ENCODE measurements at regions of chr11 and their contacts with region 1.

Region 1: DNA sequence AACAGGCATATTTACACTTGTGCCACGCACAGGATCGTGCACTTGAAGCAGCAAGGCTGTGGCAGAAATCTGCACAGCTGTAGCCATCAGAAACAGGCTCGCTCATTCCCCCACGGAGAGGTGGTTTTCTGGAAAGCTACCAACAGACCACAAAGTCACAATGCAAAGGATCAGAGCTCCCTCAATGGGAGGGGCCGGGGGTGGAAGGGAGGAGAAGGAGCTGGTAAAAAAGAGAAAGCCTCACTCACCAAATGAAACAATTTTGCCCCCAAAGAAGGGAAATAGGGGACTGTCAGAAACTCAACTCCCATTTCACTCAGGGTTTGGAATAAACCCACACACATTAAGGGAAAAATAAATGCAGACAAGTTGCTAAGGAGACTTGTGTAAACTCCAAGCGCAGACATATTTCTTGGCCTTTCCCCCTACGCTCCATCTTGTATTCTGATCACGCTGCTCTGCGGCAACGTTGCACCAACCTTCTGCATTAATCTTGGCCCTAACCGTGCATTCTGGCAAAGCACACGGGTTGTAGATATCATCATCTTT is 43.2 kb upstream of the BLID start:
- DNase-seq: peak; percentile 75
- ATAC-seq: peak; percentile 14
- H3K4me3 ChIP-seq: peak overlapping the region; percentile 75
- H3K27ac ChIP-seq: peak overlapping the region; percentile 99
- H3K4me1 ChIP-seq: peaks cover 70% of the 10 kb centered on the region
- H3K27me3 ChIP-seq: no peaks in the 10 kb centered on the region
- CTCF ChIP-seq: no peak

Region 2: DNA sequence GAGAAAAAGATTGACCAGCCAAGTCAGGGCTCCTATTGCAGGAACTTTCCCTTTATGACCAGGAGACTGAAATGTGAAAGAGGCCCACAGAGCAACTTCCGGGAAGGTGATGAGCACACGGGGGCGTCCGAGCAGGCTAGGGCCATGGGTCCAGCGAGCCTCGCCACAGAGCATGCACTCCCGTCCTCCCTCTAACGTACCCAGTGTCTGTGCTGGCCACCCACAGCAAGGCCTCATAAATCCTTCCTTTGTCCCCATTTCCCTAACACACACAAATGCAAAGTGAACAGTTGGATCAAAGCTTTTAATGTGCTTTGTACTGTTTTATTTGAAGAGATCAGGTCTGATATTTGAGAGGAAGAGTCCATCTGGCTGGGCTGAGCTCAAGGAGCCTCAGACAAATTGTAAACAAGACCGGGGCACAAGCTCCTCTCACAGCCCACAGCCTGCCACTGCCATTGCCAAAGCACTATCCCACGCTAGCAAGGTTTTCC is 87.5 kb before region 1 on chr11:
- CTCF ChIA-PET with region 1: no interaction called
- POLR2A ChIA-PET with region 1: no interaction called
- intact Hi-C with region 1: no loop called
- DNase-seq: no peak
- ATAC-seq: no peak
- H3K4me3 ChIP-seq: no peak overlapping the region
- H3K27ac ChIP-seq: no peak overlapping the region
- H3K4me1 ChIP-seq: no peaks in the 10 kb centered on the region
- H3K27me3 ChIP-seq: peaks cover 16% of the 10 kb centered on the region
- CTCF ChIP-seq: no peak

Region 3: GRCh38 chr11:122170815-122171475 is 11.7 kb after region 1 on chr11:
- CTCF ChIA-PET with region 1: no interaction called
- POLR2A ChIA-PET with region 1: interaction called, 4 read pairs
- intact Hi-C with region 1: loop called (anchors 1 kb)
- DNase-seq: peak; percentile 99
- ATAC-seq: peak; percentile 69
- H3K4me3 ChIP-seq: peak overlapping the region; percentile 48
- H3K27ac ChIP-seq: peak overlapping the region; percentile 99
- H3K4me1 ChIP-seq: peaks cover 89% of the 10 kb centered on the region
- H3K27me3 ChIP-seq: no peaks in the 10 kb centered on the region
- CTCF ChIP-seq: no peak

Region 4: GRCh38 chr11:122197055-122197987 is 38.1 kb after region 1 on chr11:
- CTCF ChIA-PET with region 1: no interaction called
- POLR2A ChIA-PET with region 1: interaction called, 4 read pairs
- intact Hi-C with region 1: loop called (anchors 1 kb)
- DNase-seq: peak; percentile 100
- ATAC-seq: peak; percentile 75
- H3K4me3 ChIP-seq: peak overlapping the region; percentile 17
- H3K27ac ChIP-seq: peak overlapping the region; percentile 94
- H3K4me1 ChIP-seq: peaks cover 80% of the 10 kb centered on the region
- H3K27me3 ChIP-seq: no peaks in the 10 kb centered on the region
- CTCF ChIP-seq: no peak

Region 5: GRCh38 chr11:122505304-122506006 is 346.2 kb after region 1 on chr11:
- CTCF ChIA-PET with region 1: no interaction called
- POLR2A ChIA-PET with region 1: no interaction called
- intact Hi-C with region 1: loop called (anchors 10 kb)
- DNase-seq: peak; percentile 92
- ATAC-seq: peak; percentile 100
- H3K4me3 ChIP-seq: no peak overlapping the region
- H3K27ac ChIP-seq: no peak overlapping the region
- H3K4me1 ChIP-seq: no peaks in the 10 kb centered on the region
- H3K27me3 ChIP-seq: peaks cover 81% of the 10 kb centered on the region
- CTCF ChIP-seq: peak; percentile 95

Measured in PC-3 (cell line).